ENCODE measurements at regions of chr3 and their contacts with region 1.

Region 1: DNA sequence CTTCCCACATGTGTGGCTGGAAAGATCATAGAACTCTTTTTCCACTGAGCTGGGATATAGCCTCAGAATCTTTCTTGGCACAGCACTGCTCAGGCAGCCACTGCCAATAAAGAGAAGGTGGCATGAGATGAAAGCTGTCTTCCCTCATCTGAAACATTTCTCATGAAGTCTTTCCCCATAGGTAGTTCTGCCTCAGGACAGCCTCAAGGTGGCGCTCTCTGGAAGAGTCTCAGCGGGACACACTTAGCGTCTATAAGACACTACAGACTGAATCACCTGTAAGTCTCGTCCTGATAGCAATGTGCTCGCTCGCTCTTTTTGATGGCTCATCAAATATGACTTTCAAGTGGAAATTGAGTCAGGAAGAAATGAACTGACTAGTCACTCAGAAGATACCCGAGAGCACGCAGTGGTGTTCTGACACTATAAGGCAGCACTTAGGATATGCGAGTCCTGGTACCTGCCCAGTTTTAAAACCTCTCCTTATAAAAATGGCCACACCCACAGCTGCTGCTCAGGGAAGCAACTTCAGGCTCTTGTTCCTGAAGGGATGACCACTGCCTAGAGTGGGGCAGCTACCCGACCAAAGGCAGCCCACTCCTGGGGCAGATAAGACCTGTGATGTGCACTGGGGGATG is 269.5 kb downstream of the SUCLG2 start:
- DNase-seq: peak; percentile 41
- H3K4me3 Mint-ChIP-seq: no peak overlapping the region
- H3K27ac Mint-ChIP-seq: no peak overlapping the region
- H3K4me1 Mint-ChIP-seq: peaks cover 7% of the 10 kb centered on the region
- H3K27me3 Mint-ChIP-seq: no peaks in the 10 kb centered on the region

Region 2: DNA sequence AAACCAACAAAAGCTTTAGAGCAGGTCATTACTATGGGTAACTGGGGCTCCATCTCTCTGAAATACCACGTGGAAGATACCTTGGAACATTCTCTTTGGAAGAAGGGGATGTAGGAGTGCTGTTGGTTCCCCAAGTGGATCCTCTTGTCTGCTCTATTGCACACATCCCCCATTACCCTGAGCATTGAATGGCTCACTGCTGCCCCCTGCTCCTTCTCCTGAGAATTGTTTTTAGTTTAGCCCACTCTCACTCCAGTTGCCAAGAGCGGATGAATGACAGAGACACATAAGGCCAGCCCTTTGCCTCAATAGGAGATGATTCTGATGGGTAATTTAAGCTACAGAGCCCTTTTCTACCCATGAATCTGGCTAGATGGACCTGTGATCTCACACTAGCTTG is 405.2 kb after region 1 on chr3:
- CTCF ChIA-PET with region 1: interaction called, 46 read pairs
- POLR2A ChIA-PET with region 1: no interaction called
- DNase-seq: peak; percentile 61
- H3K4me3 Mint-ChIP-seq: no peak overlapping the region
- H3K27ac Mint-ChIP-seq: no peak overlapping the region
- H3K4me1 Mint-ChIP-seq: peaks cover 2% of the 10 kb centered on the region
- H3K27me3 Mint-ChIP-seq: peaks cover 6% of the 10 kb centered on the region

Measured in activated CD4-positive, alpha-beta memory T cell treated with anti-CD3 and anti-CD28 coated beads, Interleukin-2, amount 10 ng/mL, durations not matched to agents 7 days and 5 days (primary cell).